PC-3 (cell line): ENCODE measurements at regions of chr12 and their contacts with region 1.

Region 1: DNA sequence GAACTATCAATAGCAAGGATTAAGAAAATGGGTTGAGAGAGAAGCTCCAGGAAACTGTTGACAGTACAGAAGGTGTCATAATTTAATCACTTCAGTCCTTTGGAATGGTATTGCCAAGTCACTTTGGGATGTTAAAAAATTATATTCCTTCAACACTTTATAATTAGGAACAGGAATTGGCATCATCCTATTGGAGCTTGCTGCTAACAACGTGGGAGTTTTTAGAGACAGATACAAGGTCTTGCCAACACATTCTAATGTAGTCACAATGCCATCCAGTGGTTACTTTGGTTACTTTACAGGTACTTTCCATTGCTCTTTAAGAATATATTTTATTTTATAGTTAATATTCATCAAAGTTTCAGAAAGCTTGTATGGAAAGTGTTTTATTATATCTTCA is 310.1 kb downstream of the SYT1 start:
- DNase-seq: peak; percentile 70
- ATAC-seq: peak; percentile 83
- H3K4me3 ChIP-seq: no peak overlapping the region
- H3K27ac ChIP-seq: no peak overlapping the region
- H3K4me1 ChIP-seq: no peaks in the 10 kb centered on the region
- H3K27me3 ChIP-seq: no peaks in the 10 kb centered on the region
- CTCF ChIP-seq: peak; percentile 62

Region 2: DNA sequence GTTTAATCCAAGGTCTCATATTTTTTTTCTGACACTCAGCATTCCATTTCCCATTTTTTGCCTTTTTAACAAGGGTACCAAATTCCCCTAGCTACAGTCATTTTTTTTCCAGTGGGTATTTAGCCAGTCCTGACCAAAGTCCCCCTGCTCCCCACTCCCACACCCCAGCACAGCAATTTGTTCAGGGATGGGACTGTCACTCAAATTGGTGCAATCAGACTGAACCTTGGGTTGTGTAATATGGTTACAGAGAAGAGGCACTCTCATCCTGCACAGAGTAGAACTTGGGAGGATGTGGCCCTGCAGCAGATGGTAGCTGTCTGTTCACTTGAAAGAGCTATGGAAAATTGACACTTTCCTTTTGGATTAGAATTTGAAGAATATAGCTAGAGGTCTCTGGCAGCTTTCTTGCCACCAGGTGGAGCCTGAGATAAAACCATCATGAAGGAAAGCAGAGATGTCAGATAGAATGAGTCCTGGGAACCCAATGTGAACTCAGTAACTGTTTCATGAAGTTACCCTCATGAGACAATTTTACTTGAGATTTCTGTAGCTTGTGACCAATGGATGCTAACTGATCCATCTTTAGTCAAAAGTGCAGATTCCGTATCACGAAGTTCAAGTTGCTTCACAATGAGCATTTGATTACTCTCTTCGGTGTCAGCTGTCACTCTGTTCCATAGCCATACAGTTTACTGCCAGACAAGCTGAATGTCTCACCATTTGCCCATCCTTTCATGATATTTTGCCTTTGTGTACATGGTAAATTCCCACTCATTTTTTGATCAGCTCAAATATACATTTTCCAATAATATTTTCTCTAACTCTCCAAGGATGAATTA is 704.1 kb before region 1 on chr12:
- CTCF ChIA-PET with region 1: interaction called, 3 read pairs
- POLR2A ChIA-PET with region 1: no interaction called
- intact Hi-C with region 1: loop called (anchors 1 kb)
- DNase-seq: peak; percentile 64
- ATAC-seq: peak; percentile 80
- H3K4me3 ChIP-seq: no peak overlapping the region
- H3K27ac ChIP-seq: no peak overlapping the region
- H3K4me1 ChIP-seq: no peaks in the 10 kb centered on the region
- H3K27me3 ChIP-seq: no peaks in the 10 kb centered on the region
- CTCF ChIP-seq: peak; percentile 81

Region 3: GRCh38 chr12:78641837-78642423 is 532.7 kb before region 1 on chr12:
- CTCF ChIA-PET with region 1: no interaction called
- POLR2A ChIA-PET with region 1: no interaction called
- intact Hi-C with region 1: loop called (anchors 5 kb)
- DNase-seq: peak; percentile 40
- ATAC-seq: peak; percentile 83
- H3K4me3 ChIP-seq: no peak overlapping the region
- H3K27ac ChIP-seq: no peak overlapping the region
- H3K4me1 ChIP-seq: no peaks in the 10 kb centered on the region
- H3K27me3 ChIP-seq: no peaks in the 10 kb centered on the region
- CTCF ChIP-seq: peak; percentile 48; the same call in 1 of the 2 replicates

Region 4: GRCh38 chr12:79006306-79006705 is 168.3 kb before region 1 on chr12:
- CTCF ChIA-PET with region 1: no interaction called
- POLR2A ChIA-PET with region 1: no interaction called
- intact Hi-C with region 1: loop called (anchors 5 kb)
- DNase-seq: peak; percentile 52
- ATAC-seq: peak; percentile 46
- H3K4me3 ChIP-seq: no peak overlapping the region
- H3K27ac ChIP-seq: no peak overlapping the region
- H3K4me1 ChIP-seq: no peaks in the 10 kb centered on the region
- H3K27me3 ChIP-seq: no peaks in the 10 kb centered on the region
- CTCF ChIP-seq: peak; percentile 69

Region 5: DNA sequence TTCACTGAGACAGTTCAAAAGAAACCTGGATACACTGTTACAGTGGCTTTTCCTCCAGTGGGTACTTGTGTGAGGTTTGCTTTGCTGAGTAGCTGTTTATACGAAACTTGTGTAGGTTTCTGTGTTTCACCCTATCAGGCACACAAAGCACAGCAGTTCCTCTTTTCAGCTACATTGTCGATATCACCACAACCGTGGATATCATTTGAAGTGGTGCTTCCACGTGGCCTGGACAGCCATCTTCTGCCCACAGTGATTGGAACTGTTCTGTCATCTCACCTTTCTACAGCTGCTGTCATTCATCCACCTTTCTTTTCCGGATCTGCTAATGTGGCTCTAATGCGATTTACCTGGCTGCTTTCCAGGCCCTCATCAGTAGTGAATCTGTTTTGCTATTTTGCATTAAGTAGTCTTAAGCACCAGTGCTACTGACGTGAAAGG is 58.7 kb after region 1 on chr12:
- CTCF ChIA-PET with region 1: no interaction called
- POLR2A ChIA-PET with region 1: no interaction called
- intact Hi-C with region 1: no loop called
- DNase-seq: no peak
- ATAC-seq: no peak
- H3K4me3 ChIP-seq: no peak overlapping the region
- H3K27ac ChIP-seq: no peak overlapping the region
- H3K4me1 ChIP-seq: no peaks in the 10 kb centered on the region
- H3K27me3 ChIP-seq: no peaks in the 10 kb centered on the region
- CTCF ChIP-seq: no peak